ENCODE measurements at regions of chr13 and their contacts with region 1.

Region 1: GRCh38 chr13:27533155-27533643 is 82.8 kb upstream of the MTIF3 start:
- DNase-seq: peak; percentile 41 to 76
- ATAC-seq: peak; percentile 99 to 100
- H3K4me3 ChIP-seq: peak overlapping the region; percentile 41
- H3K27ac ChIP-seq: no peak overlapping the region
- H3K4me1 ChIP-seq: no peaks in the 10 kb centered on the region
- CTCF ChIP-seq: peak; percentile 75
- EP300 ChIP-seq: no peak
- POLR2A ChIP-seq: no peak
- RAD21 ChIP-seq: peak; percentile 68 to 73

Region 2: DNA sequence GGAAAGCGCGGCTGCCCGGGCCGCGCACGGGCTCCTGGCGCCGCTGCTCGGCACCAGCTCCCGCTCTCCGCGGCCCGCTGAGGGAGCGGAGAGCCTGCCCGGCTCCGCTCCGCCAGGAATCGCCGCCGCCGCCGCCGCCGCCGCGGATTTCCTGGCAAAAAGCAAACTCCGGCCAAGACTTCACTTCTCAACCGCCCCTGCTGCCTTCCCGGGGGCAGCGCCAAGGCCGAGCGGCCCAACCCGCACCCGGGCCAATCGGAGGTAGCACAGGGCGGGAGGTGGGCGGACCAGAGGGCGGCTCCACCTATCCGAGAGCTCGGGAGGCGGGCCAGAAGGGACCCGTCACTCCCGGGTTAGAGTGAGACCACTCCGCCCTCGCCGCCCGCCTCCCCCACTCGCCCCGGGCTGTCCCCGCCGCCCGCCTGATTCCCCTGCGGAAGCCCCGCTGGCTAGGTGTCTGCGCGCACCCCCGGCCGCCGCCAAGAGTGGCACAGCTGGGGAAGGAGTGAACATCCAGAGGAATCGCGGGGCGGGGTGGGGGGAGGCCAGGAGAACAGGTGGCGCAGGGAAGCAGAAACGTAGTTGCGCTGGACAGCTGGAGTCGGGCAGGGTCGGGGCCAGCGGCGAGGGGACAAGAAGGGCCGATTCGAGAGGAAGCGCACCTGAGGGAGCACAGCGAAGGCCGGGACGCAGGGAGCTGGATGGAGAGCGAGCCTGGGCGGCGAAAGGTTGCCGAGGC is 87.3 kb after region 1 on chr13 and contains the start of gene LNX2:
- CTCF ChIA-PET with region 1: interaction called, 13 read pairs
- POLR2A ChIA-PET with region 1: interaction called, 5 read pairs
- DNase-seq: peak; percentile 80 to 92
- ATAC-seq: peak; percentile 91 to 97
- H3K4me3 ChIP-seq: peak within 1 kb of the TSS; percentile 83
- H3K27ac ChIP-seq: peak within 1 kb of the TSS; percentile 84 to 97
- H3K4me1 ChIP-seq: peaks cover 20% of the 10 kb centered on the region
- CTCF ChIP-seq: no peak
- EP300 ChIP-seq: no peak
- POLR2A ChIP-seq: no peak; the same call in 1 of the 2 replicates
- RAD21 ChIP-seq: no peak
- polyA plus RNA-seq, gene LNX2: 6.3 and 6.8 TPM in 2 replicates

Region 3: GRCh38 chr13:27728271-27728670 is 195.1 kb after region 1 on chr13:
- CTCF ChIA-PET with region 1: no interaction called
- POLR2A ChIA-PET with region 1: no interaction called
- DNase-seq: peak in 1 of 2 experiments; percentile 14
- ATAC-seq: no peak
- H3K4me3 ChIP-seq: no peak overlapping the region
- H3K27ac ChIP-seq: no peak overlapping the region
- H3K4me1 ChIP-seq: no peaks in the 10 kb centered on the region
- CTCF ChIP-seq: no peak
- EP300 ChIP-seq: no peak
- POLR2A ChIP-seq: no peak
- RAD21 ChIP-seq: no peak